Sigmoid colon (tissue), 7 donors: ENCODE measurements at regions of chr3 and their contacts with region 1.

Region 1: GRCh38 chr3:25033407-25034029 is 394.5 kb upstream of the RARB start:
- DNase-seq: no peak
- H3K4me3 ChIP-seq: no peak overlapping the region
- H3K27ac ChIP-seq: no peak overlapping the region
- H3K4me1 ChIP-seq: peaks cover 0 to 36% (median 22%) of the 10 kb centered on the region in 4 donors
- H3K27me3 ChIP-seq: no peaks in the 10 kb centered on the region
- CTCF ChIP-seq: peak in 2 of 4 experiments; percentile 7 to 34
- EP300 ChIP-seq: no peak
- POLR2A ChIP-seq: no peak

Region 2: DNA sequence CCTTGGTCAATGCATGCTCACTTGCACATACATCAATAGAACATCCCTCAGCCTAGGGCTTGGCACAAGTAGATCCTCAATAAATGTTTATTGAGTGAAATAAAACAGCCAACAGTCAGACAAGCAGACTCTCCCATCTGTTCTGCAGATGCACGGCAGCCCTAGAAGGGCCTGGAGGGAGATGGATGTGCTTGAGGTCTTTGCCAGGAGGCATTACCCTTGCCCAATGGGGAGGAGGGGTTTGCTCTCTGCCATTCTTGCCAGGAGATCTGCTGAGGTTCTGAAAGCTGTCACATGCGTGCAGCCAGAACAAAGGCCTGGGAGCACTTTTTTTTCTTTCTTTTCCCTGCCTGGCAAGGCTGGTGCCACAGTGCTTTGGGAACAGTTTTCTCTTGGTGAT is 189.6 kb before region 1 on chr3:
- intact Hi-C with region 1: loop called (anchors 10 kb)
- DNase-seq: peak; percentile 90
- H3K4me3 ChIP-seq: no peak overlapping the region
- H3K27ac ChIP-seq: peak overlapping the region in 3 of 4 donors; percentile 48 to 60 (median 53)
- H3K4me1 ChIP-seq: peaks cover 0 to 51% (median 23%) of the 10 kb centered on the region in 4 donors
- H3K27me3 ChIP-seq: no peaks in the 10 kb centered on the region
- CTCF ChIP-seq: no peak
- EP300 ChIP-seq: peak in 1 of 4 donors; percentile 65
- POLR2A ChIP-seq: no peak

Region 3: GRCh38 chr3:24945563-24945962 is 88.0 kb before region 1 on chr3:
- intact Hi-C with region 1: no loop called
- DNase-seq: no peak
- H3K4me3 ChIP-seq: no peak overlapping the region
- H3K27ac ChIP-seq: no peak overlapping the region
- H3K4me1 ChIP-seq: no peaks in the 10 kb centered on the region
- H3K27me3 ChIP-seq: no peaks in the 10 kb centered on the region
- CTCF ChIP-seq: no peak
- EP300 ChIP-seq: no peak
- POLR2A ChIP-seq: no peak